ENCODE measurements at regions of chr1 and their contacts with region 1.

Region 1: DNA sequence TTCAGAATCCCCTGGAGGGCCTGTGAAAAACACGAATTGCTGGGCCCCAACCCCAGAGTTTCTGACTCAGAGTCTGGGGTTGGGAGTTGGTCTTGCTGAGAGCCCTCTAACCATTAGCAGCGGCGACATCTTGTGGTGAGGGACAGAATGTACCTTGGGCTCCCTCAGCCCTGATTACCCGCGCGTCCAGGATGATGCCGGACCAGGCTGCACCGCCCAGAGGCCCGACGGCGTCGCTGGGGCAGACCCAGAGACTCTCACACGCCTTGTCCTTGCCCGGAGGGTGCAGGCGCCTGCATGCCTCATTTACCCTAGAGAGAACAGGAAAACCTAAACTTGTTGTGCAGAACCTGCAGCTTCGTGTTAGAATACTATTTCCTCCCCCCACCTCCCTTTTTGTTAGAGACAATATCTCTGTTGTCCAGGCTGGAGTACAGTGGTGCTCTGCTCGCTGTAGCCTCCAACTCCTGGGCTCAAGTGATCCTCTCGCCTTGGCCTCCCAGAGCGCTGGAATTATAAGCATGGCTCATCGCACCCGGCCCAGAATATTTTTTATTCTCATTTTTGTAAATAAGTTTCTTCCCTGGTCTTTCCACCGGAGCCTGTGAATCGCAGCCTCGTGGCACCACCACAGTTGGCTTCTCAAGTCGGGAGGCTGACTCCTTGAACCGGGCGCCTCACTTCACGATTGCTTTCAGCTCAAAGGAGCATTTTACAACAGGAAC is 22.2 kb upstream of the RD3 start:
- DNase-seq: peak; percentile 16 to 71 (median 46)
- ATAC-seq: peak; percentile 80
- H3K4me3 ChIP-seq: no peak overlapping the region
- H3K4me3 Mint-ChIP-seq: peak overlapping the region; percentile 61 to 84 (median 73)
- H3K27ac ChIP-seq: no peak overlapping the region
- H3K27ac Mint-ChIP-seq: peak overlapping the region in 2 of 9 donors; percentile 46 to 63
- H3K4me1 ChIP-seq: peaks cover 10 to 11% of the 10 kb centered on the region in 2 donors
- H3K4me1 Mint-ChIP-seq: peaks cover 5 to 35% (median 20%) of the 10 kb centered on the region in 7 donors
- H3K27me3 ChIP-seq: no peaks in the 10 kb centered on the region
- H3K27me3 Mint-ChIP-seq: peaks cover 0 to 12% (median 5%) of the 10 kb centered on the region in 5 donors

Region 2: DNA sequence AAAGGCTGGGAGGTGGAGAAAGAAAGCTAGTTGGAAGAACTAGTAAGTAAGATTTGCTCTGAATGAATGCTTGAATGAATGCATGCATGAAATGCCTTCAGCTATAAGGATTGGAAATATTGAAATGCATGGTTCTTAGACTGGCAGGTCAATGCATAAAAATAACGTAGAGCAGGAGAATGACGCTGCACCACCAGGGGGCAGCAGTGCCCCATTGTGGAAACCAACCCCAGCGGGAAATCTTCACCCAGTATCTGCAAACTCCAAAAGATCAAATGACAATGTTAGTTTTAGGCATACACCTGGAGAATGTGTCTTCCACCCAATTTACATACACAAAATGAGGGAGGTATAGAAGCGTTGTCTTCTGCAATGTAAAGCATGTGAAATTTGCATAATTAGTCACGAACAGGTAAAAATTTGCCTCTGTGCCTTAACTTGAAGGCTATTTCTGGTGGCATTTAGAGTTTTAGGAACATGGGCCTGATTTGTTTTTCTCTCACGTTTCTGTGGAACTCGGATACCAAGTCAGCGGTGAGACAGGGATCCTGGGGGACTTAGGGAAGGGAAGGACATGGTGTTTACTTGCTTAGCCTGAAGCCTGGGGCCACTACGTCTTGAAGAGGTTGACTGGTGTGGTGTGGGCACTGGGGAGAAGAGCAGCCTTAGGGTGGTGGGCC is 1106.8 kb before region 1 on chr1:
- CTCF ChIA-PET with region 1: no interaction called
- POLR2A ChIA-PET with region 1: no interaction called
- intact Hi-C with region 1: loop called in 1 of 2 experiments (anchors 1 kb)
- DNase-seq: peak; percentile 39 to 76 (median 64)
- ATAC-seq: peak; percentile 79
- H3K4me3 ChIP-seq: no peak overlapping the region
- H3K4me3 Mint-ChIP-seq: no peak overlapping the region
- H3K27ac ChIP-seq: no peak overlapping the region
- H3K27ac Mint-ChIP-seq: no peak overlapping the region
- H3K4me1 ChIP-seq: no peaks in the 10 kb centered on the region
- H3K4me1 Mint-ChIP-seq: peaks cover 0 to 2% (median 0%) of the 10 kb centered on the region in 7 donors
- H3K27me3 ChIP-seq: no peaks in the 10 kb centered on the region
- H3K27me3 Mint-ChIP-seq: peaks cover 0 to 14% (median 0%) of the 10 kb centered on the region in 5 donors

Region 3: DNA sequence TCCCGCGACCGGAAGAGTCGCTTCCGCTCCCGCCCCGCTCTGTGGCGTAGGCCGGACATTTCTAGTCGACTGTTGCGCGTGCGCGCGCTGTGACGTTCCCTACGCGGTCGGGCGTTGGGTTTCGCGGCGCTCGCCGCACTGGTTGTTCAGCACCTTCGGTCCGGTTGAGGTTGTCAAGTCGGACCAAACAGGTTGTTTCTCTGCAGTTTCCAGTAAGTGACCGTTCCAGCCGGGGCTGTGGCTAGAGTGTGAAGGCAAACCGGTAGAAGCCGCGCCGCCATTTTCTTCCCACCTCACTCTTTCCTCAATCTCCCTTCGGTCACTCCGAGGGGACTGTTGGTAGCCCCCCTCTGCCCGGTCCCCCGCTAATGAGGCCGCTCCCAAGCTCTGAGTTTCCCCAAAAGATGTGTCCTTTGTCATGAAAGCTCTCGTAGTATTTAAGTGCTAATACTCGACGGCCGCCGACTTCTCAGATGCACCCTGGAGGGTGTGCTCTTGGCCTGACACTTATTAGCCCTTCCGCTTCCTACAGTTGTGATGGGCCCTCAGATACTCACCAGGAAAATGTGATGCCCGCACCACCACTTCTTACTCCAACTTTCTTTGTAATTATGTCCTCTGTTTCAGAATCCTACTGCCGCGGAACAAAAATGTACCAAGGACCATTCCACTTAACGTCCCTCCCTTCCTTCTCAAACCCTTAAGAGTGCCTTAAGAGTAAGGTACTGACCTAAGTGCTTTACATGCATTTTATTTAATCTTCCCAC is 131.3 kb before region 1 on chr1:
- CTCF ChIA-PET with region 1: no interaction called
- POLR2A ChIA-PET with region 1: no interaction called
- intact Hi-C with region 1: loop called in 1 of 2 experiments (anchors 1 kb)
- DNase-seq: peak; percentile 53 to 85 (median 64)
- ATAC-seq: peak; percentile 94
- H3K4me3 ChIP-seq: peak overlapping the region; percentile 77
- H3K4me3 Mint-ChIP-seq: peak overlapping the region; percentile 87 to 97 (median 92)
- H3K27ac ChIP-seq: peak overlapping the region; percentile 80
- H3K27ac Mint-ChIP-seq: peak overlapping the region; percentile 92 to 98 (median 95)
- H3K4me1 ChIP-seq: peaks cover 5% of the 10 kb centered on the region in 2 donors
- H3K4me1 Mint-ChIP-seq: peaks cover 0 to 39% (median 31%) of the 10 kb centered on the region in 7 donors
- H3K27me3 ChIP-seq: no peaks in the 10 kb centered on the region
- H3K27me3 Mint-ChIP-seq: peaks cover 0 to 5% (median 0%) of the 10 kb centered on the region in 5 donors

Region 4: DNA sequence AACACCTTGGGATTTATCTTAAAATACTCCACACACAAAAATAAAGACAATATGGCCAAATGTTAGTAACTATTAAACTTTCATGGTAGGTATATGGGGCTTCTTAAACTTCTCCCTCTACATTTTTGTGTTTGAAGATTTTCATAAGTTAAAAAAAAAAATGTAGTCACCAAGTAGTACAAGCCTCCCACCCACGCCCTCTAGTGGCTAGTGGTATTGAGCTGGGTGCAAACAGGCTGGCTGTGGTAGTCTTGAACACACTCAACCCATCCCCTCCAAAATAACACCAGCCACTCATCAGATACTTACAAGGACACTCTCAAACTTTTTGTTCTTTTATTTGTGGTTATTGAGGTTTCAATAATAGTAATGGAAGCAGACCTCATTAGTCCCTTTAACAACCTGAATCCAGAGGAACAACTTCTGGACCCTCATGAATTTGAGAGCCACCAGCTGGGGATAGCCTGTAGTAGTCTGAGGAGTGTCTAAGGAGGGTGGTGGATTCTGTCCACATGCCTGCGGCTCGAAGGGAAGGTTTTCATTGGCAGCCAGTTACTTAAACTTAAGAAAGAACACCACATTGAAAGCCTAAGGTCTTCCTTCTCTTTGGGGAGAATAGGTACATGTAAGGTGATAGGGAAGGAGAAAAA is 37.9 kb before region 1 on chr1:
- CTCF ChIA-PET with region 1: interaction called, 4 read pairs
- POLR2A ChIA-PET with region 1: no interaction called
- intact Hi-C with region 1: loop called (anchors 1 to 2 kb)
- DNase-seq: peak; percentile 43 to 81 (median 73)
- ATAC-seq: peak; percentile 89
- H3K4me3 ChIP-seq: no peak overlapping the region
- H3K4me3 Mint-ChIP-seq: no peak overlapping the region
- H3K27ac ChIP-seq: no peak overlapping the region
- H3K27ac Mint-ChIP-seq: no peak overlapping the region
- H3K4me1 ChIP-seq: no peaks in the 10 kb centered on the region
- H3K4me1 Mint-ChIP-seq: peaks cover 0 to 4% (median 0%) of the 10 kb centered on the region in 7 donors
- H3K27me3 ChIP-seq: no peaks in the 10 kb centered on the region
- H3K27me3 Mint-ChIP-seq: peaks cover 6 to 42% (median 24%) of the 10 kb centered on the region in 5 donors

Region 5: GRCh38 chr1:211654838-211655787 is 140.9 kb after region 1 on chr1:
- CTCF ChIA-PET with region 1: interaction called, 8 read pairs
- POLR2A ChIA-PET with region 1: no interaction called
- intact Hi-C with region 1: loop called (anchors 1 kb)
- DNase-seq: peak; percentile 60 to 82 (median 71)
- ATAC-seq: peak; percentile 95
- H3K4me3 ChIP-seq: no peak overlapping the region
- H3K4me3 Mint-ChIP-seq: no peak overlapping the region
- H3K27ac ChIP-seq: no peak overlapping the region
- H3K27ac Mint-ChIP-seq: no peak overlapping the region
- H3K4me1 ChIP-seq: no peaks in the 10 kb centered on the region
- H3K4me1 Mint-ChIP-seq: peaks cover 0 to 5% (median 0%) of the 10 kb centered on the region in 7 donors
- H3K27me3 ChIP-seq: no peaks in the 10 kb centered on the region
- H3K27me3 Mint-ChIP-seq: peaks cover 0 to 13% (median 0%) of the 10 kb centered on the region in 5 donors

Region 6: DNA sequence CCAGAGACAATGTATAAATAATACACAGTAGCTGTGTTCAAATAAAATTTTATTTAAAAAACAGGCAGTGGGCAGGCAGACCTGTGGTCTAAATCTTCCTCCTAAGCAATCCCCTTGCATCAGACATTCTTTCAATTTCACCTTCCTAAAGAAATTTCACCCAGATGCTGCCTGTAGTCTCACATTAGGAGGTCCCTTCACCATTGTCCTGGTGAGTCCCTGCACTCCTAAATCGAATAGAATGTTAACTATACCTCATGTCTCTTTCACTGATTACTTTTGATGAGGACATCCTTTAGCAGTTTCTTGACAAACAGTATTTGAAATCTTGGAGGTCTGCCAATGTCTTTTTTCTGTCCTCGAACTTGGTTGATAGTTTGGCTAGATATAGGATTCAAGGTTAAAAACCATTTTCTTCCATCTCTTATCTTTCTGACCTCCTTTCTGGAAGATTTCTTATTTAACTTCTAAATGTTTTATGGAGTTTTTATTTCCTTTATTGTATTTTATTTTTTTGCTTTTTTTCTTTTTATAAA is 238.8 kb after region 1 on chr1:
- CTCF ChIA-PET with region 1: no interaction called
- POLR2A ChIA-PET with region 1: no interaction called
- intact Hi-C with region 1: no loop called
- DNase-seq: no peak
- ATAC-seq: no peak
- H3K4me3 ChIP-seq: no peak overlapping the region
- H3K4me3 Mint-ChIP-seq: no peak overlapping the region
- H3K27ac ChIP-seq: no peak overlapping the region
- H3K27ac Mint-ChIP-seq: no peak overlapping the region
- H3K4me1 ChIP-seq: no peaks in the 10 kb centered on the region
- H3K4me1 Mint-ChIP-seq: no peaks in the 10 kb centered on the region
- H3K27me3 ChIP-seq: no peaks in the 10 kb centered on the region
- H3K27me3 Mint-ChIP-seq: no peaks in the 10 kb centered on the region

Region 7: GRCh38 chr1:212053993-212054392 is 539.8 kb after region 1 on chr1:
- CTCF ChIA-PET with region 1: no interaction called
- POLR2A ChIA-PET with region 1: no interaction called
- intact Hi-C with region 1: no loop called
- DNase-seq: no peak
- ATAC-seq: no peak
- H3K4me3 ChIP-seq: no peak overlapping the region
- H3K4me3 Mint-ChIP-seq: no peak overlapping the region
- H3K27ac ChIP-seq: no peak overlapping the region
- H3K27ac Mint-ChIP-seq: no peak overlapping the region
- H3K4me1 ChIP-seq: no peaks in the 10 kb centered on the region
- H3K4me1 Mint-ChIP-seq: peaks cover 0 to 8% (median 0%) of the 10 kb centered on the region in 7 donors
- H3K27me3 ChIP-seq: no peaks in the 10 kb centered on the region
- H3K27me3 Mint-ChIP-seq: no peaks in the 10 kb centered on the region

Measured in naive thymus-derived CD4-positive, alpha-beta T cell (primary cell).